HAP-1 (cell line): ENCODE measurements at regions of chr15 and their contacts with region 1.

Region 1: GRCh38 chr15:29668120-29668602 is 154.1 kb downstream of the TJP1 start:
- DNase-seq: peak; percentile 90 to 91
- H3K4me3 ChIP-seq: no peak overlapping the region
- H3K4me1 ChIP-seq: no peaks in the 10 kb centered on the region
- H3K27me3 ChIP-seq: no peaks in the 10 kb centered on the region

Region 2: GRCh38 chr15:29613951-29614382 is 54.2 kb before region 1 on chr15:
- in situ Hi-C with region 1: no loop called
- DNase-seq: peak; percentile 26 to 60
- H3K4me3 ChIP-seq: no peak overlapping the region
- H3K4me1 ChIP-seq: no peaks in the 10 kb centered on the region
- H3K27me3 ChIP-seq: no peaks in the 10 kb centered on the region

Region 3: GRCh38 chr15:29792426-29793159 is 124.4 kb after region 1 on chr15:
- in situ Hi-C with region 1: no loop called
- DNase-seq: no peak
- H3K4me3 ChIP-seq: no peak overlapping the region
- H3K4me1 ChIP-seq: no peaks in the 10 kb centered on the region
- H3K27me3 ChIP-seq: no peaks in the 10 kb centered on the region

Region 4: DNA sequence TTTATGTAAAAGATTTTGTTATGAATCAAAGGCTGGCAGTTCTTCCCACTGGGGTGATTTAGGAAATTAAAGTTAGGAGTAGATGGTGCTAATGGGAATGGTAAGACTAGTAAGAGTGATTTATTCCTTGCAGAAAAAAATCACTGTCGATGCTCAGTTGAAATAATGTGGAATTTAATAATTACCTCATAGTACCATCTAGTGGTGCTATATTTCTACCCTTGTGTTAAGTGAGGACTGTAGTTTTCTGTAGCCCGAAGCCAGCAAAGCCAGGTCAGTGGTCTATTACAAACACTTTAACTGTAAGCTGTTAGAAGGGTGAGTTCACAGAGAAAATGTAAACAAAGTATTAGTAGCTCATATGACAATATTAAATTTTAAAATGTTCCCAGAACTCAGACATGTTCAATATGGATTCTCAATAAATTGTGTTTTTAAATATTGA is 375.1 kb after region 1 on chr15:
- in situ Hi-C with region 1: loop called (anchors 25 kb)
- DNase-seq: peak in 1 of 2 experiments; percentile 2
- H3K4me3 ChIP-seq: no peak overlapping the region
- H3K4me1 ChIP-seq: peaks cover 4% of the 10 kb centered on the region
- H3K27me3 ChIP-seq: no peaks in the 10 kb centered on the region